Pancreas (tissue), 10 donors: ENCODE measurements at regions of chr1 and their contacts with region 1.

Region 1: DNA sequence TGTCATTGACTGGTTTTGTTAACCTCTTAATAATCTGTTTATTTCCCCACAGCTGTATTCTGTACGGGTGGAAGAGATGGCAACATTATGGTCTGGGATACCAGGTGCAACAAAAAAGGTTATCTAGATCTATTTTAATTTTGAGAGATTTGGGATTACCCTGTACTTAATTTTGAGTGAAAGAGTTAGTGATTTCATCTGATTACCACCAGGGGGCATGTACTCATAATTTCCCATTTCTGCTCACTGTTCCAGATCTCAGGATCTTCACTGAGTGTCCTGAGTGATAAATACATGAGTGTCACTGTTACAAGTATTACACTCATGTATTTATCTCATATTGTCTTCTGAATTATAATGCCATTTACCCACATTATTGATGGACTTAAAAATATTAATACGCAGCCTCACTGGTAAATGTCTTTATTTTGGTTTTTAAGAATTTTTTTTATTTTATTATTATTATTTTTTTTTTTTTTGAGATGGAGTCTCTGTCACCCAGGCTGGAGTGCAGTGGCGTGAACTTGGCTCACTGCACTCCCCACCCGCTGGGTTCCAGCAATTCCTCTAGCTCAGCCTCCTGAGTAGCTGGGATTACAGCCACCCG is 27.4 kb downstream of the DTL start:
- DNase-seq: no peak
- ATAC-seq: peak in 3 of 4 donors; percentile 70 to 74 (median 73)
- H3K4me3 ChIP-seq: no peak overlapping the region
- H3K27ac ChIP-seq: no peak overlapping the region
- H3K4me1 ChIP-seq: no peaks in the 10 kb centered on the region
- H3K27me3 ChIP-seq: no peaks in the 10 kb centered on the region
- CTCF ChIP-seq: peak; percentile 22 to 59 (median 52)

Region 2: DNA sequence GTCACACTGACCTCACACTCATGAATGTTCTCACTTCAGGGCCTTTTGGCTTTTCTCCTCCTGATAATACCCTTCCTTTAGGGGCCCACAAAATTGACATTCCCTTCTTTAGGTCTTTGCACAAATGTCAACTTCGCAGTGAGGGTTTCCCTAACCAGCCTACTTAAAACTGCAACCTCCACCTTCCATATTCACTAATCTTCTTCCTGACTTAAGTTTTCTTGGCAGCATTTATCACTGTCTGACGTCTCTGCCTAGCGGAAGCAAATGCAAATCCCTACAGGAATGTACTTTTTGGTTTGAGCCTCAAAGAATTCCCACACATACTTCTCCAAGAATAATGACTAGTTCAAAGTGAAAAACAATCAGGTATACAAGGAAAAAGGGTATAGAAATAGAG is 60.4 kb before region 1 on chr1:
- intact Hi-C with region 1: no loop called
- DNase-seq: no peak
- ATAC-seq: no peak
- H3K4me3 ChIP-seq: no peak overlapping the region
- H3K27ac ChIP-seq: no peak overlapping the region
- H3K4me1 ChIP-seq: no peaks in the 10 kb centered on the region
- H3K27me3 ChIP-seq: no peaks in the 10 kb centered on the region
- CTCF ChIP-seq: no peak

Region 3: GRCh38 chr1:212247179-212247721 is 184.3 kb after region 1 on chr1:
- intact Hi-C with region 1: no loop called
- DNase-seq: no peak
- ATAC-seq: no peak
- H3K4me3 ChIP-seq: no peak overlapping the region
- H3K27ac ChIP-seq: no peak overlapping the region
- H3K4me1 ChIP-seq: no peaks in the 10 kb centered on the region
- H3K27me3 ChIP-seq: no peaks in the 10 kb centered on the region
- CTCF ChIP-seq: no peak

Region 4: DNA sequence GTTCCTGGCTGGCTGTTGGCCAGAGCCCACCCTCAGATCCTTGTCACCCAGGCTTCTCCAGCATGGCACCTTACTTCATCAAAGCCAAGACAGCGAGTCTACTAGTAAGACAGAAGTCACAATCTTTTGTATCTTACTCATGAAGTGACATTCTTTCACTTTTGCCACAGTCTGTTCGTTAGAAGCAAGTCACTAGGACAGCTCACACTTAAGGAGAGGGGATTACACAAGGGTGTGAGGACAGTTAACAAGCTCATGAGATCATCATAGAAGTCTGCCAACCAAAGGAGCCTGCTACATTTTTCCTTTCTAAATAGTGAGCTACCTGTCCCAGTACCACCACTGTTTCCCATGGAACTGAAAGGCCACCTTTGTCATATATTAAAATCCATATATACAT is 290.2 kb after region 1 on chr1:
- intact Hi-C with region 1: no loop called
- DNase-seq: no peak
- ATAC-seq: no peak
- H3K4me3 ChIP-seq: no peak overlapping the region
- H3K27ac ChIP-seq: no peak overlapping the region
- H3K4me1 ChIP-seq: no peaks in the 10 kb centered on the region
- H3K27me3 ChIP-seq: no peaks in the 10 kb centered on the region
- CTCF ChIP-seq: no peak

Region 5: DNA sequence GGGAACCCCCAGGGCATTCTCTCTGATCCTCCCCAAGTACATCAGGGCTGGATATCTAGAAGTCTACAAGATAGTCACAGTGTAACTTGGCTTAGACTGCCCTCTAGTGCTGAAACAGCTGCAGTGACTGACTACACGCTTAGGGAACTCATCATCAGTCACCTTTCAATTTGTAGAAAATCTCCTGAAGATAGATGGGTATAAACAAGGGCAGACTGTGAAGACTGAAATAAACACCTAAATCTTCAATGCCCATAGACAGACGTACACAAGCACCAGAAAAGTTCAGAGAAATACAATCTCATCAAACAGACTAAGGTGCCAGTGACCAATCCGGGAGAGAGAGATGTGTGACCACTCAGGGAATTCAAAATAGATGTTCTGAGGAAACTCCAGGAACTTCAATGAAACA is 305.1 kb after region 1 on chr1:
- intact Hi-C with region 1: loop called in 2 of 3 experiments (anchors 5 to 10 kb)
- DNase-seq: peak in 3 of 6 donors; percentile 31 to 63 (median 35)
- ATAC-seq: peak; percentile 78 to 98 (median 96)
- H3K4me3 ChIP-seq: no peak overlapping the region
- H3K27ac ChIP-seq: no peak overlapping the region
- H3K4me1 ChIP-seq: no peaks in the 10 kb centered on the region
- H3K27me3 ChIP-seq: no peaks in the 10 kb centered on the region
- CTCF ChIP-seq: peak; percentile 63 to 83 (median 72)